CD4-positive, alpha-beta T cell (primary cell): ENCODE measurements at regions of chr18 and their contacts with region 1.

Region 1: GRCh38 chr18:48951448-48952286 is 902 bp upstream of the SMAD7 start:
- DNase-seq: peak; percentile 59 to 95 (median 79)
- ATAC-seq: peak; percentile 30
- H3K4me3 ChIP-seq: peak overlapping the region; percentile 91
- H3K4me3 Mint-ChIP-seq: peak overlapping the region; percentile 99
- H3K27ac ChIP-seq: peak overlapping the region; percentile 88 to 93
- H3K27ac Mint-ChIP-seq: peak overlapping the region; percentile 99
- H3K4me1 ChIP-seq: peaks cover 63% of the 10 kb centered on the region
- H3K4me1 Mint-ChIP-seq: peaks cover 57% of the 10 kb centered on the region
- H3K27me3 ChIP-seq: no peaks in the 10 kb centered on the region
- H3K27me3 Mint-ChIP-seq: no peaks in the 10 kb centered on the region
- CTCF ChIP-seq: no peak

Region 2: DNA sequence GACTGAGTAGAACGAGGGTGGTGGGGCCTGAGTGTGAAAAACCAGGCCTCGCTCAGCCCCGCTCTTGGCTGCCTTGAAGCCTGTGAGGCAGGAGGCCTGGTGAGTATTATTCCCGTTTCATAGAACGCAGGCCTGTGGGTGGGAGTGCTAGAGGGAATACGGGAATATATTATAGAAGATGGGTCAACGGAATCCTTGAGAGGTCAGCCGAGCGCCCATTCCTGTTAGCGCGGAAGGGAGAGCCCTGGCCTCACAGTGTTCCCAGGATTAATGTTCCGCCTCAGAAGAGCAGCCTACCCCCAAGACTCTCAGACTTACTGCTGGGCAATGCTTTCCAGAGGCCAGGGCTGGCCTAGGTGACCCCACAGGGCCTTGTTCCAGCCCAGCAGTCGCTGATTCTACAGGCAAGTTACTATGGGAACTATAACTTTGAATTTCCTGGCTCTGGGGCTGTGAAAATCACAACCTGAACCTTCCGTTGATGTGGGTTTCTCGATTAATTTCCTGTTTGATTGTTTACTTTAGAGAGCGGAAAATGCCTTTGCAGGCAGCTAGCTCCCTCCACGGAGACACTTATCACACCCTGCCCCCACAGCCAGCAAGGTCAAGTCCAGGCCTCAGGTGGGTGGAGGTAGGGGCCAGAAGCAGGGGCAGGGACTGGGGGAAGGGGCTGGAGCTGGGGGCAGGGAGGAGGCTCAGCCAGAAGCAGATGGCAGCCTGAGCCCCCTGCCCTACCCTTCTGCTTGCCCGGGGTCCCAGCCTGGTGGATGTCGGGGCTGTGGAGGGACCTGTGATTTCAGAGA is 109.2 kb before region 1 on chr18:
- CTCF ChIA-PET with region 1: no interaction called
- POLR2A ChIA-PET with region 1: interaction called, 16 read pairs
- intact Hi-C with region 1: loop called in 1 of 2 experiments (anchors 5 kb)
- DNase-seq: peak in 13 of 14 experiments; percentile 27 to 94 (median 37)
- ATAC-seq: peak; percentile 87
- H3K4me3 ChIP-seq: peak overlapping the region; percentile 13
- H3K4me3 Mint-ChIP-seq: peak overlapping the region; percentile 40
- H3K27ac ChIP-seq: peak overlapping the region; percentile 58 to 81
- H3K27ac Mint-ChIP-seq: peak overlapping the region; percentile 92
- H3K4me1 ChIP-seq: peaks cover 75% of the 10 kb centered on the region
- H3K4me1 Mint-ChIP-seq: peaks cover 88% of the 10 kb centered on the region
- H3K27me3 ChIP-seq: no peaks in the 10 kb centered on the region
- H3K27me3 Mint-ChIP-seq: no peaks in the 10 kb centered on the region
- CTCF ChIP-seq: no peak

Region 3: GRCh38 chr18:48922801-48923730 is 28.6 kb before region 1 on chr18:
- CTCF ChIA-PET with region 1: interaction called, 3 read pairs
- POLR2A ChIA-PET with region 1: interaction called, 17 read pairs
- intact Hi-C with region 1: loop called (anchors 2 kb)
- DNase-seq: peak in 4 of 14 experiments; percentile 44 to 68 (median 54)
- ATAC-seq: no peak
- H3K4me3 ChIP-seq: peak overlapping the region; percentile 43
- H3K4me3 Mint-ChIP-seq: peak overlapping the region; percentile 85
- H3K27ac ChIP-seq: no peak overlapping the region
- H3K27ac Mint-ChIP-seq: peak overlapping the region; percentile 74
- H3K4me1 ChIP-seq: peaks cover 67% of the 10 kb centered on the region
- H3K4me1 Mint-ChIP-seq: peaks cover 79% of the 10 kb centered on the region
- H3K27me3 ChIP-seq: no peaks in the 10 kb centered on the region
- H3K27me3 Mint-ChIP-seq: no peaks in the 10 kb centered on the region
- CTCF ChIP-seq: no peak

Region 4: DNA sequence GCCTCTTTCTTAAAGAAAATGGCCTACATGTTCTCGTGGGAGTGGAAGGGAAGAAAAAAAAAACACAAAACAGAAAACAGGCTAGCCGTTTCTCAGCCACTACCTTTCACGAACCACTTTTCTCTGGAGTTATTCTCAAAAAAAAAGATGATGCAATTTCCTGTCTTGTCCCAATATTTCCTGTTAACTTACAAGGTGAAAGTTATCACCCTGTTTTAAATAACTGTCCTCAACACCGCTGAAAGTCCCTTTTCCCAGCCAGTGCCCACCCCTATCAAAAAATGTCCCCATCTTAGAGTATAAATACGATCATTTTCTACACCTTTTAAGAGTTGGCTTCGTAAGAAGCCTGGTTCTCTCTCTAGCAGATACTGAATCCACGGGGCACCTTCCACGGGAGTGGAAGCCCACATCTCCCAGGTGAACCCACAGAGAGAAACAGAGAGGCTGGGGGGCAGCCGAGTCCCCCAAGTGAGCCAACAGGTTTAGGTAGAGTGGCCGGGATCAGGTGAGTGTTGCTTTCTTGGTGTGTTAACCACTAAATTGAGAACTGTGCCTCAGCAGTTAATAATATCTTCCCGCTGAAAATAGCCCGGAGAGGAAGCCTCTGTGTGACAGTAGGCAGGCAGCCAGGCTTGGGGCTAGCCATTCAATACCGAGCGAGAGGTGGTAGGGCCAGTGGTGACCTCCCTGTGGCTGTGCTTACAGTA is 16.8 kb before region 1 on chr18:
- CTCF ChIA-PET with region 1: interaction called, 18 read pairs
- POLR2A ChIA-PET with region 1: interaction called, 50 read pairs
- intact Hi-C with region 1: no loop called
- DNase-seq: peak in 1 of 14 experiments; percentile 45
- ATAC-seq: no peak
- H3K4me3 ChIP-seq: peak overlapping the region; percentile 1
- H3K4me3 Mint-ChIP-seq: peak overlapping the region; percentile 46
- H3K27ac ChIP-seq: no peak overlapping the region
- H3K27ac Mint-ChIP-seq: peak overlapping the region; percentile 29
- H3K4me1 ChIP-seq: peaks cover 88% of the 10 kb centered on the region
- H3K4me1 Mint-ChIP-seq: peaks cover 92% of the 10 kb centered on the region
- H3K27me3 ChIP-seq: no peaks in the 10 kb centered on the region
- H3K27me3 Mint-ChIP-seq: no peaks in the 10 kb centered on the region
- CTCF ChIP-seq: no peak

Region 5: DNA sequence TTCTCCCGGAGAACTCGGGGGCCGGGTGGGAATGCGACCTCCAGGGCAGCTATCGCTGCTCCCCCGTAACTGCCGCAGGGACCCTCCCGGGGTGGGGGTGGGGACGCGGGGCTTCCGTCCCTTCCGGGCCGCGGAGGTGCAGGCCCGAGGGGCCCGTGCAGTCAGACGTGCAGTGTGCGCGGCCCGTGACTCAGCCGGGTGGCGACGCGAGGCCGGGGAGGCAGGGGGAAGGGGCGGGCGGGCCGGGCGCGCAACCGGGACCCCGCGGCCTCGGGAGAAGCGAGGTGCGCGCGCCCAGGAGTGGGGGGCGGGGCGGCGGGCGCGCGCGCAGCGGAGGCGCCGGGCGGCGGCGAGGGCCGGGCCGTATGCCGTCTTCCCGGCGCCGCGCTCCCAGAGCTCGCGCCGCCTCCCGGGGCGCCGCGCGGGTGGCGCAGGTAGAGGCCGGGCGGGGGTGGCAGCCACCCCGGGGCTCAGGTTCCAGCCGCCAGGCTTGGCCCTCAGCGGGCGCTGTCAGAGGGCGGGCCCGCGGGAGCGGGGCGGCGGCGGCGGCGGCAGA is 24.1 kb after region 1 on chr18:
- CTCF ChIA-PET with region 1: interaction called, 3 read pairs
- POLR2A ChIA-PET with region 1: no interaction called
- intact Hi-C with region 1: loop called in 1 of 2 experiments (anchors 2 kb)
- DNase-seq: peak; percentile 18 to 84 (median 48)
- ATAC-seq: peak; percentile 80
- H3K4me3 ChIP-seq: peak overlapping the region; percentile 52
- H3K4me3 Mint-ChIP-seq: no peak overlapping the region
- H3K27ac ChIP-seq: no peak overlapping the region
- H3K27ac Mint-ChIP-seq: no peak overlapping the region
- H3K4me1 ChIP-seq: peaks cover 22% of the 10 kb centered on the region
- H3K4me1 Mint-ChIP-seq: peaks cover 14% of the 10 kb centered on the region
- H3K27me3 ChIP-seq: peaks cover 0 to 7% of the 10 kb centered on the region in 2 experiments
- H3K27me3 Mint-ChIP-seq: peaks cover 36% of the 10 kb centered on the region
- CTCF ChIP-seq: no peak

Region 6: GRCh38 chr18:49031511-49032188 is 80.0 kb after region 1 on chr18:
- CTCF ChIA-PET with region 1: no interaction called
- POLR2A ChIA-PET with region 1: no interaction called
- intact Hi-C with region 1: loop called in 1 of 2 experiments (anchors 5 kb)
- DNase-seq: peak in 7 of 14 experiments; percentile 4 to 78 (median 30)
- ATAC-seq: peak; percentile 80
- H3K4me3 ChIP-seq: no peak overlapping the region
- H3K4me3 Mint-ChIP-seq: peak overlapping the region; percentile 12
- H3K27ac ChIP-seq: no peak overlapping the region
- H3K27ac Mint-ChIP-seq: peak overlapping the region; percentile 27
- H3K4me1 ChIP-seq: peaks cover 11% of the 10 kb centered on the region
- H3K4me1 Mint-ChIP-seq: peaks cover 15% of the 10 kb centered on the region
- H3K27me3 ChIP-seq: no peaks in the 10 kb centered on the region
- H3K27me3 Mint-ChIP-seq: no peaks in the 10 kb centered on the region
- CTCF ChIP-seq: no peak

Region 7: GRCh38 chr18:49100226-49100968 is 148.7 kb after region 1 on chr18:
- CTCF ChIA-PET with region 1: no interaction called
- POLR2A ChIA-PET with region 1: no interaction called
- intact Hi-C with region 1: no loop called
- DNase-seq: no peak
- ATAC-seq: no peak
- H3K4me3 ChIP-seq: no peak overlapping the region
- H3K4me3 Mint-ChIP-seq: no peak overlapping the region
- H3K27ac ChIP-seq: no peak overlapping the region
- H3K27ac Mint-ChIP-seq: no peak overlapping the region
- H3K4me1 ChIP-seq: no peaks in the 10 kb centered on the region
- H3K4me1 Mint-ChIP-seq: no peaks in the 10 kb centered on the region
- H3K27me3 ChIP-seq: no peaks in the 10 kb centered on the region
- H3K27me3 Mint-ChIP-seq: no peaks in the 10 kb centered on the region
- CTCF ChIP-seq: no peak

Region 8: DNA sequence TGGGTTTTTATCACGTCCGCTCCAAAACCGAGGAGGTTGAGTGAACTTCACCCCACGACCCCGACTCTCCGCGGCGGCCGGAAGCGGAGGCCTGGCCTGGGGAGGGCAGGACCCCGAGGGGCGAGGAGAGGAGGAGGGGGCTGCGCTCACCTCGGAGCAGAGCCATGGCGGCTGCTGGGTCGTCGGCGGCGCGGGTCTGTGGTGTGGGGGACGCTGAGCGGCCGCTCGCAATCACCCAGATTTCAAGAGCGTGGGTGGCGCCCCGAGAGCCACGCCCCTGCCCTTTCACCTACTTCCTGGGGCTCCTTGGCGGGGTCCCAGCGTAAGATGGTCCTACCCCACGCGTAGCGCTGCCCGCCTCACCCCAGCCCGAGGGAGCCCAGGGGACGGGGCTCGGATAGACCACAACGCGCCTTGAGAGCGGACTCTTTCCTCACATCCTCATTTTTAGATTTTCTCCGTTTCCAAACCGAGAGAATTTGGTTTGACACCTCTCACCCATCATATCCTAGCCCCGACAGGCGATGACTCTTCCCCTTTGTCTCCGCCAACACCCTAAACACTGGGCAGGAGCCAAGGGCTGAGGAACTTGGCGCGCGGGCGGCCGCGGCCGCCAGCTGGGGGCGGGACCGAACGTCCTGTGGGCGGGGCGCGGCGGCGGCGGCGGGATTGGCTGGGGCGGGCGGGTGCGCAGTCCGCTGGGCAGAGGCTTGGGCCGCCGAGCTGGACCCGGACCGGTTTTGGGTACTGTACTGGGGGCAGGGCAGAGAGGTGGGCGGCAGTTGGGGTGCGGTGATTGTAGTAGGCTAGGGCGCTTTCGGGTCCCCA is 861.9 kb after region 1 on chr18 and contains the start of gene ACAA2:
- CTCF ChIA-PET with region 1: no interaction called
- POLR2A ChIA-PET with region 1: interaction called, 3 read pairs
- intact Hi-C with region 1: loop called in 1 of 2 experiments (anchors 10 kb)
- DNase-seq: peak; percentile 53 to 89 (median 72)
- ATAC-seq: peak; percentile 80
- H3K4me3 ChIP-seq: peak within 1 kb of the TSS; percentile 96
- H3K4me3 Mint-ChIP-seq: peak within 1 kb of the TSS; percentile 100
- H3K27ac ChIP-seq: peak within 1 kb of the TSS; percentile 90 to 96
- H3K27ac Mint-ChIP-seq: peak within 1 kb of the TSS; percentile 87
- H3K4me1 ChIP-seq: peaks cover 35% of the 10 kb centered on the region
- H3K4me1 Mint-ChIP-seq: peaks cover 63% of the 10 kb centered on the region
- H3K27me3 ChIP-seq: no peaks in the 10 kb centered on the region
- H3K27me3 Mint-ChIP-seq: no peaks in the 10 kb centered on the region
- CTCF ChIP-seq: no peak
- total RNA-seq, gene ACAA2: 5.7 to 6.2 TPM